Activated CD4-positive, alpha-beta T cell treated with anti-CD3 and anti-CD28 coated beads, Interleukin-2, amount 10 ng/mL, durations not matched to agents 24 days and 14 days (primary cell): ENCODE measurements at regions of chr3 and their contacts with region 1.

Region 1: GRCh38 chr3:73502609-73503583 is 121.8 kb downstream of the PDZRN3 start:
- DNase-seq: peak; percentile 80
- H3K4me3 Mint-ChIP-seq: no peak overlapping the region
- H3K27ac Mint-ChIP-seq: no peak overlapping the region
- H3K4me1 Mint-ChIP-seq: no peaks in the 10 kb centered on the region
- H3K27me3 Mint-ChIP-seq: peaks cover 4% of the 10 kb centered on the region

Region 2: DNA sequence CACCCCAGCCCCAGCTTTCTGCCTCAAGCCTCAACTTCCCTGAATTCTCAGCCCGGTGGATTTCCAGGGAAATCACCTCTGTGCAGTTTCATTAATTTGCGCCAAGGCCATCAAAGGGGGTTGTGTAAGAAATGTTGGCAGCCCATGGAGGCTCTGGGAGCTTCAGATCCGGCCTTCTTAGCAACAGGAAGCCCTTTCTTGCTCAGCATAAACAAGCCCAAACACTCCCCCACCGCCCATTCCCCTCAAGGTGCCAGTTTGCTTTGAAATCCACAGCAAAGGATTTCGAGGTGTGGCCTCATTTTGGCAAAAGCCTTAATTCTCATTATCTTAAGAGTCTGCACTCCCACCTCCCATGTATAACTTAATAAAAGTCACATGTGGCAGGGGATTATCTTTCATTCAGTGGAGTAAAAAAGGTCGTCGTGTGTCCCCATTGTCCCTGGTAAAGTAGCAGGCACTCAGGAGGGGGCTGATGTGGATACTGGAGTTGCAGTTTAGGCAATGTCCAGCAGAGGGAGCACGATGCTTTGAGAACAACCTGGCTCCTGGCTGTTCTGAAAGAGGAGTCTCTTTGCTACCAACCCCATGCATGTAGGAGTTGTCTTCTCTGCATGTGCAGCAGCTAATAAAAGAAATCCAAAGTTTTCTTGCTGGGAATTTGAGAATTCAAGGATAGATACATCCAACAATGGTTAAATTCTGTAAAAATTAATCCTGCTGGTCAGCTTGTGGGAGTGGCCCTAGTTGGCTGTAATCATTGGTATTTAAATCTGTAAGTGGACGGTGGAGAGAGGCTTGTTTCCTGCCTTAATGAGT is 401.9 kb before region 1 on chr3:
- intact Hi-C with region 1: loop called (anchors 1 kb)
- DNase-seq: peak; percentile 92
- H3K4me3 Mint-ChIP-seq: no peak overlapping the region
- H3K27ac Mint-ChIP-seq: no peak overlapping the region
- H3K4me1 Mint-ChIP-seq: no peaks in the 10 kb centered on the region
- H3K27me3 Mint-ChIP-seq: no peaks in the 10 kb centered on the region

Region 3: DNA sequence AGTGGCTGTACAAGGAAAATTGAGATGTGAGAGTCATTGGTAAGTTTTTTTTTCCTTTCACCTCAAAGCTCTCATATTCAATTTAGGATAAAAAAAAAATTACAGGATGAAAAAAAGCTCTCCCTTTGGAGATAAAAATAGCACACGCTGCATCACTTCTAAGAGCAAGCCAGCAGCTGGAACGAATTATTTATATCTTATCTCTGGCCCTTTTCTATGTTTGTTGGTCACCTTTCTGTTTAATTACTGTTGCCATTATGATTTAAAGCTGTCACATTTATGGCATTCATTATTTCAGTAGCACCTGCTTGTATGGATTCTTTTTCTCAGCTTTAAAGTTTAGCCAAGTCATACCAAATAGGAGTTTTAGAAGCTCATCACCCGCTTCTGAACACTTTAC is 293.5 kb after region 1 on chr3:
- intact Hi-C with region 1: no loop called
- DNase-seq: no peak
- H3K4me3 Mint-ChIP-seq: no peak overlapping the region
- H3K27ac Mint-ChIP-seq: no peak overlapping the region
- H3K4me1 Mint-ChIP-seq: no peaks in the 10 kb centered on the region
- H3K27me3 Mint-ChIP-seq: no peaks in the 10 kb centered on the region